Activated T-helper 2 cell treated with anti-CD3 and anti-CD28 coated beads, Interferon-gamma antibody, Interleukin-2, Interleukin-4, amounts not matched to agents 10 μg/mL and 5 μg/mL and 100 μg/mL, durations not matched to agents 14 hours and 24 hours and 36 hours (primary cell): ENCODE measurements at regions of chr7 and their contacts with region 1.

Region 1: DNA sequence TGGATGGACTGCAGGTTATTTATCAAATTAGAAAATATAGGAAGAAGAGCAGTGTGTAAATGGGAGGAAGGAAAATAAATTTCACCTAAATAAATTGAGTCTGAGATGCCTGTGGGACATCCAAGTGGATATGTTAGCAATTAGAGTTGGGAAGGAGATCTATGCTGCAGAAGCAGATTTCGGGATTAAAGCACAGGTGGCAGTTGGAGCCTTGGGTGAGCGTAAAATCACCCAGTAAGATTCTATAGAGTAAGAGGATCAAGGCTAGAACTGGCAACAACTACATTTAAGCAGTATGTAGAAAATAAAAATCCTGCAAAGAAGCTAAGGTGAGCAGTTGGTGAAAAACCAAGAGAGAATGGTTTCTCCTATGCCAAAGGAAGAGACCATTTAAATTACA is 8.4 kb downstream of the TRIM4 start:
- DNase-seq: no peak
- H3K4me3 Mint-ChIP-seq: no peak overlapping the region
- H3K27ac Mint-ChIP-seq: no peak overlapping the region
- H3K4me1 Mint-ChIP-seq: peaks cover 17% of the 10 kb centered on the region
- H3K27me3 Mint-ChIP-seq: no peaks in the 10 kb centered on the region

Region 2: DNA sequence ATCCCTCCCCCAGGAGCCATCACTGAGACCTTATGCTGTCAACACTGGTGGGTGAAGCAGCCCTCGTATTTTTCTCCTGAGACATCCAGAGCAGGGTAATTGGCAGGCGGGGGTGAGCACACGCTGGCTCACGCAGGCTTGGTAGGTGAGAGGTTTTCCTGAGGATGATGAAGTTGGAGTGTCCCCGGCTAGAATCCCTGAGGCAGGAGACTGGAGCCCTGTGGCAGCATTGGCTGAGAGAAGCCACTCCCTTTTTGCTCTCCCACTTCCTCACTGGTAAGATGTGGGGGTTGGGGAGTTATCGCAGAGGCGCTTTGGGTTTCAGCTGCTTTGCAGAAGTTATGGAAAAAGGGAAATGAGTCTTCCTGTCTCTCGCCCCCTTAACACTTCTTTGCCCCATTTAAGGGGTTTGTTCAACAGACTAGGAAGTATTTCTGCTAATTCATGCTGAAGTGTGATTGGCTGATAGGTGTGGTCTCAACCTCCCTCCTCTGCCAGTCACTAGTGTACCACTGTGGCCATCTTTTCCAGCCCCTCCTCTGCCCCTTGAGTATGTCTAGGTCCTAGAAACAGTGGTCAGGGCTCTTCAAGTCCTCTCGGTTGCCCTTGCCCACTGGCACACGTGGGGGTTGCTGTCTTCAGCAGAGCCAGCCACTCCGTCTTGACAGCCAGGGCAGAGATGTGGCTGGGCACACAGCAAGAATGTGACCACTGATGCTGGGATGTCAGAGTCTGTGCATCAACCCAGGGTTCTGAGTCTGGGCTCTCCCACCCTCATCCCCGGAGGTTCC is 530.7 kb before region 1 on chr7:
- intact Hi-C with region 1: no loop called
- DNase-seq: no peak
- H3K4me3 Mint-ChIP-seq: peak overlapping the region; percentile 82
- H3K27ac Mint-ChIP-seq: peak overlapping the region; percentile 90
- H3K4me1 Mint-ChIP-seq: peaks cover 40% of the 10 kb centered on the region
- H3K27me3 Mint-ChIP-seq: no peaks in the 10 kb centered on the region

Region 3: GRCh38 chr7:99949638-99950228 is 38.8 kb after region 1 on chr7:
- intact Hi-C with region 1: loop called (anchors 5 kb)
- DNase-seq: no peak
- H3K4me3 Mint-ChIP-seq: no peak overlapping the region
- H3K27ac Mint-ChIP-seq: no peak overlapping the region
- H3K4me1 Mint-ChIP-seq: peaks cover 4% of the 10 kb centered on the region
- H3K27me3 Mint-ChIP-seq: peaks cover 2% of the 10 kb centered on the region

Region 4: GRCh38 chr7:99990460-99990852 is 79.5 kb after region 1 on chr7:
- intact Hi-C with region 1: loop called (anchors 1 kb)
- DNase-seq: no peak
- H3K4me3 Mint-ChIP-seq: no peak overlapping the region
- H3K27ac Mint-ChIP-seq: no peak overlapping the region
- H3K4me1 Mint-ChIP-seq: peaks cover 4% of the 10 kb centered on the region
- H3K27me3 Mint-ChIP-seq: peaks cover 9% of the 10 kb centered on the region